ENCODE measurements at regions of chr20 and their contacts with region 1.

Region 1: DNA sequence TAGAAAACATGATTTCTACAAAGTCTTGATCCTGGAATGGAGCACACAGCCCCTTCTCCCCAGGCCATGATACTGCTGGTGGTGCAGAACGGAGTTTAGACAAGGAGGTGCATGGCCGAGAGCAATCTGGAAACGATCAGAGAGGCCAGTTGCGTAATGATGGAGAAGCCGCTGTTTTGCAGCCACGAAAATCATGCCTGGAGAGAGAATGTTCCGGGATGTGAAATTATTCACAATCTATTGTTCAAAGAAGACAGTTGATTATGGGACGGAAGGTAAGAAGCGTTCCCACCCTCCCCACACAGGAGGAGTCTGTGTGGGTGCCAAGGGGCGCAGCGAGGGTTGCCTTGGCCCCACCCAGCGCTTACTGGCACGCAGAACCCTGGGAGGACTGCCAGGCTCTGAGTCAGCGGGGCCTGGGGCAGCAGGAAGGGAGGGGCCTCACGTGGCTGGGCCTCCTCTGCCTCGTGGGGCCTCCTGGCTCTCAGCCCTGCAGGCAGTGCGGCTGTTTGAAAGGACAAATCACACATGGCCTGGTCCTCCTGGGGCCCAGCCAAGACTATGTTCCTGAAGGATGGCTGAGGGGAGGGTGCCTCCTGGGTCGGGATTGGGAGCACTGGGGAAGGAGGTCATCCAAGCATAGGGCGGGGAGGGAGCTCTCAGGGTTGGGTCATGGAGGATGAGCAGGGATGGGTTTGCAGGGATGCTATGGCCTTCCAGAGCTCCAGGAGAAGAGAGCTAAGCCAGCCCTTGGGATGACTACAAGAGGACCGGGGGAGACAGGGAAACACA is 8.7 kb upstream of the AP5S1 start:
- DNase-seq: peak; percentile 98
- H3K4me3 ChIP-seq: peak overlapping the region; percentile 35 to 74 (median 44)
- H3K4me3 Mint-ChIP-seq: peak overlapping the region; percentile 82 to 94
- H3K27ac ChIP-seq: peak overlapping the region; percentile 93 to 100
- H3K27ac Mint-ChIP-seq: peak overlapping the region; percentile 97 to 99 (median 99)
- H3K4me1 ChIP-seq: peaks cover 62 to 64% of the 10 kb centered on the region in 2 donors
- H3K4me1 Mint-ChIP-seq: peaks cover 60% of the 10 kb centered on the region
- H3K27me3 ChIP-seq: no peaks in the 10 kb centered on the region
- H3K27me3 Mint-ChIP-seq: peaks cover 0 to 3% (median 3%) of the 10 kb centered on the region in 3 donors
- CTCF ChIP-seq: no peak

Region 2: DNA sequence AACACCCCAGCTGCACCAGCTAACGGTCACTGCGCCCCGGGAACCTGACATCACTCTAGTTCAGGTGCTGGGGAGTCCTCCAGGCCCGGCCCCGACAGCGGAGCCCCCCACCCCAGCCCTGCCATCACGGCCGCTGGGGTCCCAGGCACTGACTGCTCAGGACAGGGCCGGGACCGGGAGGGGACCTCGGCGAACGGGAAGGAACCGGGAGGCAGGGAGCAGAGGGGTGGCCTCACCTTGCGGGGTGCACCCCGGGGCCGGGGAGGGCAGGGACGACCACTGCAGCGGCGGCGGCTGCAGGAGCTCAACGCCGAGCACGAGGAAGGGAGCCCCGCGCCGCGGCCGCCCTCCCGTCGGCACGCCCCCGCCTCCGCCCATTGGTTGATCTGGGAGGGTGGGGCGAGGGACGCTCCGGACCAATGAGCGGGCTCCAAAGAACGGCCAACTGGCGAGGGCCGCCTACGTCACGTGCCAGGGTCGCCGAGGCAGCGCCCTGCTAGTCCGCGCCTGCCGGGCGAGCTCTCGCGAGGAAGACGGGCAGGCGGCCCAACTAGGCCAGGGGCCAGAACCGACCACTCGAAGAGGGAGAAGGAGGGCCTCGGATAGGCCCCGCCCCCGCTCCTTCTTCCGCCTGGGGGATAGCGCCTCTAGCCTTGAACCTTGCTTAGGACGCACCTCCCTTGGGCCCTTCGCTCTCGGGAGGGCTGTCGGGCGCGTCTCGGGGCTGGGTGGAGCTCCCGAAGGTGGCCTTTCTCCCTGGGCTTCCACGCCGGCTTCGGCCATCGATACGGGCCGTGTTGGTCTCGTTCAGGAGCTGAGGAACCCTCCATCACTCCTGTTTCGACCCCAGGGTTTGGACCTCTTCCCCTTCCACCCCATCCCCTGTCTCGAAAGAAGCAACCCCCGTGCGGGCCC is 44.0 kb before region 1 on chr20 and contains the start of gene ADISSP:
- intact Hi-C with region 1: loop called in 1 of 2 experiments (anchors 10 kb)
- DNase-seq: peak; percentile 97 to 98 (median 97)
- H3K4me3 ChIP-seq: peak within 1 kb of the TSS; percentile 85 to 96 (median 86)
- H3K4me3 Mint-ChIP-seq: peak within 1 kb of the TSS; percentile 85 to 95
- H3K27ac ChIP-seq: peak within 1 kb of the TSS; percentile 83 to 91
- H3K27ac Mint-ChIP-seq: peak within 1 kb of the TSS; percentile 85 to 94 (median 93)
- H3K4me1 ChIP-seq: peaks cover 56 to 65% of the 10 kb centered on the region in 2 donors
- H3K4me1 Mint-ChIP-seq: peaks cover 59% of the 10 kb centered on the region
- H3K27me3 ChIP-seq: no peaks in the 10 kb centered on the region
- H3K27me3 Mint-ChIP-seq: peaks cover 0 to 2% (median 0%) of the 10 kb centered on the region in 3 donors
- CTCF ChIP-seq: no peak
- polyA plus RNA-seq, gene ADISSP: 59.6 to 78.5 (median 68.5) TPM

Region 3: GRCh38 chr20:3846740-3847428 is 35.2 kb after region 1 on chr20 and contains the start of gene MAVS:
- intact Hi-C with region 1: no loop called
- DNase-seq: peak; percentile 73 to 81 (median 79)
- H3K4me3 ChIP-seq: peak within 1 kb of the TSS; percentile 81 to 92 (median 88)
- H3K4me3 Mint-ChIP-seq: peak within 1 kb of the TSS; percentile 87 to 95
- H3K27ac ChIP-seq: peak within 1 kb of the TSS; percentile 66 to 83
- H3K27ac Mint-ChIP-seq: peak within 1 kb of the TSS; percentile 85 to 95 (median 93)
- H3K4me1 ChIP-seq: peaks cover 13 to 22% of the 10 kb centered on the region in 2 donors
- H3K4me1 Mint-ChIP-seq: peaks cover 31% of the 10 kb centered on the region
- H3K27me3 ChIP-seq: no peaks in the 10 kb centered on the region
- H3K27me3 Mint-ChIP-seq: peaks cover 0 to 1% (median 0%) of the 10 kb centered on the region in 3 donors
- CTCF ChIP-seq: no peak
- polyA plus RNA-seq, gene MAVS: 1.8 to 16.6 (median 3.2) TPM

Measured in CD14-positive monocyte (primary cell).